SK-N-SH (cell line): ENCODE measurements at regions of chr17 and their contacts with region 1.

Region 1: GRCh38 chr17:43673516-43674323 is 12.0 kb upstream of the MEOX1 start:
- DNase-seq: peak; percentile 79
- H3K4me3 ChIP-seq: no peak overlapping the region
- H3K27ac ChIP-seq: no peak overlapping the region
- H3K4me1 ChIP-seq: peaks cover 0 to 3% of the 10 kb centered on the region in 2 experiments; a peak in 1 of 4 replicates
- H3K27me3 ChIP-seq: no peaks in the 10 kb centered on the region
- CTCF ChIP-seq: peak; percentile 97
- EP300 ChIP-seq: no peak
- RAD21 ChIP-seq: peak; percentile 89

Region 2: DNA sequence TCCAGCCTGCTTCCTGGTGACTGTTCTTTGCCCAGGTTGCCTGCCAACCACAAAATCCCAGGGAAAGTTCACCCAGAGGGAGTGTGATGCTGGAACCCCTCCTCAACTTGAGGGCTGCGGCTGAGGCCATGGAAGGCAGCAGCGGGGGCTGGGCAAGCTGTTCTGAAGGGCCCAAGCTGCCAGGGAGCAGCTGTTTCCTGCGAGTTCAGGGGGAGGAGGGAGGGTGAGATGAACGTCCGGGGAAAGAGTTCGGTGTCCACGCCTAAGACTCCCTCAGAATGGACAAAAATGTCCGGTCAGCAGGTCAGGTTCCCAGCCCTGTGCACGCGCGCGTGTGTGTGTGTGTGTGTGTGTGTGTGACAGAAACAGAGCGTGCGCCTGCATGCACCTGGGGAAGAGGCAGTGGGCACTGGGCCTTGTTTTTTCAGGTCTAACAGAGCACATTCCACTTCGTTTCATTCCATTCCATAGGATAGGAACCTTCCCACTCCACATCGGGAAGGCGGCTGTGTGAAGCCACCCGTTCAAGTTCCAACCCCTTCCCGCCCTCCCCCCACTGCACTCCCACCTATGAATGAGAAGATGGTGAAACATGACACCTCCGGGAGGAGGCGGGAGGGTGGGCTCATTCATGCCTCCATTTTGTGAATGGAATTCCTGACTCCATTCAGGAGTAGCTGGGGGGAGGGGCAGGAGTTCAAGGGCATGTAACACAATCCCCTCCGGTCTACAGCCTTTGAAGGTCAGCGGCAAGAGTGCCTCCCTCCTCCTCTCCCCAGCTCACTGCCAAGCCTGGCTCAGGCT is 143.2 kb before region 1 on chr17:
- CTCF ChIA-PET with region 1: interaction called, 20 read pairs
- POLR2A ChIA-PET with region 1: no interaction called
- DNase-seq: no peak
- H3K4me3 ChIP-seq: peak overlapping the region in 1 of 2 experiments; percentile 13; a peak in 1 of 4 replicates
- H3K27ac ChIP-seq: peak overlapping the region; percentile 88 to 95
- H3K4me1 ChIP-seq: peaks cover 20 to 28% of the 10 kb centered on the region in 2 experiments; a peak in 3 of 4 replicates
- H3K27me3 ChIP-seq: no peaks in the 10 kb centered on the region
- CTCF ChIP-seq: no peak
- EP300 ChIP-seq: no peak
- RAD21 ChIP-seq: no peak

Region 3: GRCh38 chr17:43559161-43559816 is 114.4 kb before region 1 on chr17:
- CTCF ChIA-PET with region 1: interaction called, 13 read pairs
- POLR2A ChIA-PET with region 1: no interaction called
- DNase-seq: no peak
- H3K4me3 ChIP-seq: no peak overlapping the region
- H3K27ac ChIP-seq: no peak overlapping the region
- H3K4me1 ChIP-seq: no peaks in the 10 kb centered on the region
- H3K27me3 ChIP-seq: no peaks in the 10 kb centered on the region
- CTCF ChIP-seq: no peak
- EP300 ChIP-seq: no peak
- RAD21 ChIP-seq: no peak

Region 4: DNA sequence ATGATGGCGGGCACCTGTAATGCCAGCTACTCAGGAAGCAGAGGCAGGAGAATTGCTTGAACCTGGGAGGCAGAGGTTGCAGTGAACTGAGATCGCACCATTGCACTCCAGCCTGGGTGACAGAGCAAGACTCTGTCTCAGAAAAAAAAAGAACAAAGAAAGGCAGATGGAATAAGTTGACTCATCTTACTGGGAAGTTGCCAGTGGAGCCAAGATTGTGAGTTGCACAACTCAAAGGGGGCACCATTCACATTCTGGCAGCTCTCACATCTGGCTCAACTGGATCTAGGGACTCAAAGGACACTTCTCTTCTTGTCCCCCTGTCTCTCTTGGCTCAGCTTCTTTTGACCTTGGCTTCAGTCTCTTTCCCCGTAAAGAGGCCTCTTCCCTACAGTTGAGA is 73.9 kb before region 1 on chr17:
- CTCF ChIA-PET with region 1: interaction called, 12 read pairs
- POLR2A ChIA-PET with region 1: no interaction called
- DNase-seq: no peak
- H3K4me3 ChIP-seq: no peak overlapping the region
- H3K27ac ChIP-seq: no peak overlapping the region
- H3K4me1 ChIP-seq: peaks cover 2 to 7% of the 10 kb centered on the region in 2 experiments; a peak in 2 of 4 replicates
- H3K27me3 ChIP-seq: no peaks in the 10 kb centered on the region
- CTCF ChIP-seq: no peak
- EP300 ChIP-seq: no peak
- RAD21 ChIP-seq: no peak

Region 5: DNA sequence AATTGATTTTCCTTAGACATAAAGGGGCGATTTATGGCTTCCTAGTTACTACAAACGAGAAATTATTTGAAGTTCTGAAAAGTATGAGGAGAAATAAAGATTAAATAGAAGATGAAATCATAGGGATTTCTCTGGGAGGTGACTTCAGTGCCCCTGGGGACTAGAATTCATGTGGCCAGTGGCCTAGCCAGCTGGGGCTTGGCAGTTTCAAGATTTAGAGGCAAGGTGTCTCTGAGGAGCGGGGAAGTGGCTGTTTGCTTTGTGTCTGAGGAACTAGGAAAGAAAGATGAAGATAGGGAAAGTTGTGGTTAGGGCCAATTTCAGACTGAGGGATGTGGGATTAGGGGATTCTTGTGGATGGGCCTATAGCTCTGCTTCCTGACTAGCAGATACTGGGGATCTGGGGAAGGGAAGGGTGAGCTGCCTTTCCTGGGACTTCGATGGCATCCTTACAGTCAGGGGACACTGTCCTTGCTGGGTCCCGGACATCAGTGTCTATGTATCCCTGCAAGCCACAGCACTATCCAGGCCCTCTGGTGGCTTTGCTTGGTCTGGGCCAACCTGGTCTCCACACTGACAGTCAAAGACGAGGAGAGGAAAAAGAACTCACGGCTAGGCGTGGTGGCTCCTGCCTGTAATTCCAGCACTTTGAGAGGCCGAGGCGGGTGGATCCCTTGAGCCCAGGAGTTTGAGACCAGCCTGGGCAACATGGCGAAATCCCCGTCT is 10.4 kb after region 1 on chr17:
- CTCF ChIA-PET with region 1: interaction called, 16 read pairs
- POLR2A ChIA-PET with region 1: no interaction called
- DNase-seq: no peak
- H3K4me3 ChIP-seq: no peak overlapping the region
- H3K27ac ChIP-seq: no peak overlapping the region
- H3K4me1 ChIP-seq: no peaks in the 10 kb centered on the region
- H3K27me3 ChIP-seq: no peaks in the 10 kb centered on the region
- CTCF ChIP-seq: no peak
- EP300 ChIP-seq: no peak
- RAD21 ChIP-seq: no peak

Region 6: GRCh38 chr17:43900183-43900857 is 226.6 kb after region 1 on chr17:
- CTCF ChIA-PET with region 1: no interaction called
- POLR2A ChIA-PET with region 1: no interaction called
- DNase-seq: peak; percentile 98
- H3K4me3 ChIP-seq: peak overlapping the region; percentile 56 to 66
- H3K27ac ChIP-seq: no peak overlapping the region; a peak in 1 of 4 replicates
- H3K4me1 ChIP-seq: peaks cover 7 to 20% of the 10 kb centered on the region in 2 experiments; a peak in 2 of 4 replicates
- H3K27me3 ChIP-seq: no peaks in the 10 kb centered on the region
- CTCF ChIP-seq: no peak
- EP300 ChIP-seq: no peak
- RAD21 ChIP-seq: no peak